ENCODE measurements at regions of chr9 and their contacts with region 1.

Region 1: GRCh38 chr9:121185178-121185745 is 16.4 kb downstream of the RAB14 start:
- DNase-seq: no peak
- ATAC-seq: peak; percentile 55
- H3K4me3 ChIP-seq: no peak overlapping the region
- H3K27ac ChIP-seq: no peak overlapping the region
- H3K4me1 ChIP-seq: peaks cover 12% of the 10 kb centered on the region
- H3K27me3 ChIP-seq: no peaks in the 10 kb centered on the region
- CTCF ChIP-seq: no peak
- EP300 ChIP-seq: no peak
- POLR2A ChIP-seq: no peak
- RAD21 ChIP-seq: no peak

Region 2: DNA sequence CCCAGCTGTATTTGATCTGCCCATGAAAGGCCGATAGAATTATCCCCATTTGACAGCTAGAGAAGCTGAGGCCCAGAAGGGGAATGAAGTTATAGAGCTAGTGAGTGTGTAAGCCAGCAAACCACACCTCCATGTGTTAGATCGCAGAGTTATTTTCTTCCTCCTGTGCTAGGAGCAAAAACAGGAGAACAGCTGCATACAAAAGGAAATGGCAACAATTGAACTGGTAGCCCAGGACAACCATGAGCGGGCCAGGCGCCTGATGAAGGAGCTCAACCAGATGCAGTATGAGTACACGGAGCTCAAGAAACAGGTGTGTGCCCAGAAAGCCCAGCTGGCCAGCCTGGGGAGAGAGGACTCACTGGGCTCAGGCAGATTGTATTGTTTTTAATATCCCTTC is 14.0 kb before region 1 on chr9:
- CTCF ChIA-PET with region 1: interaction called, 10 read pairs
- POLR2A ChIA-PET with region 1: interaction called, 4 read pairs
- RAD21 ChIA-PET with region 1: interaction called, 4 read pairs
- SMC1A ChIA-PET with region 1: interaction called, 7 read pairs
- in situ Hi-C with region 1: no loop called
- intact Hi-C with region 1: no loop called
- DNase-seq: no peak
- ATAC-seq: no peak
- H3K4me3 ChIP-seq: no peak overlapping the region
- H3K27ac ChIP-seq: no peak overlapping the region
- H3K4me1 ChIP-seq: no peaks in the 10 kb centered on the region
- H3K27me3 ChIP-seq: no peaks in the 10 kb centered on the region
- CTCF ChIP-seq: no peak
- EP300 ChIP-seq: no peak
- POLR2A ChIP-seq: no peak
- RAD21 ChIP-seq: no peak

Region 3: GRCh38 chr9:121201738-121202533 is 16.7 kb after region 1 on chr9 and contains the start of gene RAB14:
- CTCF ChIA-PET with region 1: interaction called, 5 read pairs
- POLR2A ChIA-PET with region 1: interaction called, 8 read pairs
- RAD21 ChIA-PET with region 1: interaction called, 3 read pairs
- SMC1A ChIA-PET with region 1: interaction called, 44 read pairs
- in situ Hi-C with region 1: no loop called
- intact Hi-C with region 1: no loop called
- DNase-seq: peak; percentile 96
- ATAC-seq: peak; percentile 85
- H3K4me3 ChIP-seq: peak within 1 kb of the TSS; percentile 90
- H3K27ac ChIP-seq: peak within 1 kb of the TSS; percentile 92
- H3K4me1 ChIP-seq: peaks cover 14% of the 10 kb centered on the region
- H3K27me3 ChIP-seq: no peaks in the 10 kb centered on the region
- CTCF ChIP-seq: peak; percentile 58 to 78 (median 69); a peak in 5 of 6 replicates
- EP300 ChIP-seq: no peak
- POLR2A ChIP-seq: peak; percentile 99
- RAD21 ChIP-seq: no peak
- polyA plus RNA-seq, gene RAB14: 21.3 to 26.0 TPM

Measured in GM12878 (cell line).